ENCODE measurements at regions of chr5 and their contacts with region 1.

Region 1: DNA sequence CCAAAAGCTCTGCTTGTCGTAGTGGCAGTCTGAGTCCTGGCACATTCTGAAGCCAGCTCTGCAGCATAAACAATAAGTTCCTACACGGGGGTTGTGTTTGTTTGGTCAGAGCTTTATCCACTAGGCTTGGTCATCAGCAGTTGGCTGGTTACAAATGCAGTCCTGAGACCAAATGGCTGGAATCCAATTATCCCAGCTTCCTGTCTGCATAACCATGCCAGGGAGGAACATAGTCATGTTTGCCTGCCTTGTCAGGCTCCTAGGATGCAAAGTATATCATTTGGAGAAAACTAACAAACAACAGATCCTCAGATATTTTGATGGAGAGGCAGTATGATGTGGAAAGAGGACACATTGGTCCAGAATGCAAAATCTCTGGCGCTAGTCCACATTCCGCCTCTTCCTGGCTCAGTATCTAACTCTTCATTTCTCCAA is 85.8 kb downstream of the FBXO38 start:
- DNase-seq: no peak
- ATAC-seq: no peak
- H3K4me3 Mint-ChIP-seq: no peak overlapping the region
- H3K27ac Mint-ChIP-seq: no peak overlapping the region
- H3K4me1 Mint-ChIP-seq: no peaks in the 10 kb centered on the region
- H3K27me3 Mint-ChIP-seq: peaks cover 6% of the 10 kb centered on the region

Region 2: DNA sequence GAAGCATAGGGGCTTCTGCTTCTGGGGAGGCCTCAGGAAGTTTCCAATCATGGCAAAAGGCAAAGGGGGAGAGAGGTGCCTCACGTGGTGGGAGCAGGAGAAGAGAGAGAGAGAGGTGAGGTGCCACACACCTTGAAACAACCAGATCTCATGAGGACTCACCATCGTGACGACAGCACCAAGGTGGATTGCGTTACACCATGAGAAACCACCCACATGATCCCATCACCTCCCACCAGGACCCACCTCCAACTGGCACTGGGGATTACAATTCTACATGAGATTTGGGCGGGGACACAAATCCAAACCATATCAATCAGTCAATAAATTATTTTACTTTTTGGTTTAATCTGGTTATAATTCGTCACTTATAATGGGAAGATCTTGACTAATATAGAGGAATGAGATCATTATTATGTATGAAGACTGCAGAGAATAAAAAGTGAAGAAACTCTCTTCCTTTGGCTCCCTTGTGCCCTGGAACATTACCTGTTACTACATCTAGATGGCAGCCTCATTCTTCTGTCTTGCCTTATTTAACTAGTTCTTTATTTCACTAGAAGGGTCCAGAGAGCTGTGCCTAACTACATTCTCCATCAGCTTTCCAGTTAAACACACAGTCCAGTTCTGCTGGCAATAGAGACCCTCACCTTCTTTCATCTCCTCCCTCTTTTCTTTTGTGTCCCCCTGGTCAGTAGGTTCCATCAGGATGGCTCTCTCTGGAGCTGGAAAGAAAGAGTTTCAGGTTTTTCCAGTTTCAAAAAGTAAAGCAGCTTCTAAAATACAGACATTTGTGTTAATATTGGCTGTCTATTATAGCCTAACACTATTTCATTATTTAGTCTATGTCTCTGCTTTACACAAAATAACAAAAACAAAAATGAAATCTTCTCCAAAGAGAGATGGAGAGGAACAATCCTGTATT is 179.0 kb before region 1 on chr5:
- CTCF ChIA-PET with region 1: no interaction called
- POLR2A ChIA-PET with region 1: no interaction called
- DNase-seq: no peak
- ATAC-seq: no peak
- H3K4me3 Mint-ChIP-seq: no peak overlapping the region
- H3K27ac Mint-ChIP-seq: no peak overlapping the region
- H3K4me1 Mint-ChIP-seq: no peaks in the 10 kb centered on the region
- H3K27me3 Mint-ChIP-seq: no peaks in the 10 kb centered on the region

Region 3: DNA sequence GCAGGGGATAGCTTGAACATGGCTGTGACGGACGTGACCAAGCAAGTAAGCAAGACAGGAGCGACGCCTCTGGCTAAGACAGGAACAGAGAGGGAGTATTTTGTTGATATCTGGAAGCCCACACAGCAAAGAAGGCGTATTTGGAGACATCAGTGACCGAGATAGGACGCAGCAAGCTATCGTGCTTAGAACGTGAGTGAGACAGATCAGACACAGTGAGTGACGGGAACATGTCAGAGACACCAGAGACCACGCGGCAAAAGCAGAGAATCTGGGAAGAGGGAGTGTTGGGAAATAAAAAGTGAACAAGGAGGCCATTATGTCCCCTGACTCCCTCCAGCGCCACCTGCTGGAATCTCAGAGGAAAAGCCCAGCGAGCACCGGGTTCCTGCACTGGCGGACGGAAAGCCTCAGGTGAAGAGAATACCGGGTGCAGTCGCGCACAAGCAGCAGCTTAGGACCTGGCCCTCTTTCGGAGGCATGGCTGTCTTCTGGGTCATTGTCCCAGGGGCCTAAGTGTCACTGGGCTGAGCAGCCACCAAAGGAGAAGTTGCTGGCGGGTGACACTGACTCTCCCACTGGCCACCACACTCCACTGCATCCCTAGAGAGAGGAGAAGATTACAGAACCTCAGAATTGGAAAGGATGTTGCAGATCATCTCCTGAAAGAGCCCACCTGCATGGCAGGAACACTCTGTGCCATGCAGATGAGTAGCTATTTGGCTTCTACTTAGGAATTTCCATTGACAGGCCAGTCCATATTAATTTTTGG is 13.4 kb after region 1 on chr5:
- CTCF ChIA-PET with region 1: interaction called, 12 read pairs
- POLR2A ChIA-PET with region 1: no interaction called
- DNase-seq: peak; percentile 71
- ATAC-seq: peak; percentile 80
- H3K4me3 Mint-ChIP-seq: no peak overlapping the region
- H3K27ac Mint-ChIP-seq: no peak overlapping the region
- H3K4me1 Mint-ChIP-seq: no peaks in the 10 kb centered on the region
- H3K27me3 Mint-ChIP-seq: peaks cover 7% of the 10 kb centered on the region

Measured in activated CD8-positive, alpha-beta T cell treated with anti-CD3 and anti-CD28 coated beads, Interleukin-2, amount 10 ng/mL, durations not matched to agents 7 days and 5 days (primary cell).